ENCODE measurements at regions of chr17 and their contacts with region 1.

Region 1: DNA sequence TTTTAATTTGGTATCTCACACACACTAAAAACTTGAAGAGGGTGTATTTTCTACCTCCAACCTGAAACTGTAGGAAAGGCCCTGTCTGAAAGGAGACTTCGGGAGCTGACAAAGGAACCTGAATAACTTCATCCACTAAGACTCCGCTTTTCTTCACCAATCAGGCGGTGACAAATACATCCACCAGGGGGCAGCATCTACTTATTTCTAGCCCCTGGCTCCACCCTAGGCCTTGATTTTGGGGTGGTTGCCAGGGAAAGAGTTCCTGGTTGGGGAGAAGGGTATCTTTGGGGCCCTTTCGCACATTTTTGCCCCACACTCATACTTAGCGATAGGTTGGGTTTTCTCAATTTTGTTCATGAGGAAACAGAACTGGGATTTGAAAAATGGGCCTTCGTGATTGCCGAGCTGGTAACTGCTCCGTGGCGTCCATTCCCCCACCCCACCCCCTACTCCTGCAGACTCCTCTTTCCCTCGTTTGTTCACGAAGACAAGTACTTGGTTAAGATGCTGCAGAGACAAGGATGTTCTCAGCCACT is 4.8 kb upstream of the ARL4D start:
- DNase-seq: peak; percentile 92
- H3K4me3 Mint-ChIP-seq: no peak overlapping the region
- H3K27ac Mint-ChIP-seq: no peak overlapping the region
- H3K4me1 Mint-ChIP-seq: peaks cover 19% of the 10 kb centered on the region
- H3K27me3 Mint-ChIP-seq: no peaks in the 10 kb centered on the region
- CTCF ChIP-seq: peak; percentile 79

Region 2: DNA sequence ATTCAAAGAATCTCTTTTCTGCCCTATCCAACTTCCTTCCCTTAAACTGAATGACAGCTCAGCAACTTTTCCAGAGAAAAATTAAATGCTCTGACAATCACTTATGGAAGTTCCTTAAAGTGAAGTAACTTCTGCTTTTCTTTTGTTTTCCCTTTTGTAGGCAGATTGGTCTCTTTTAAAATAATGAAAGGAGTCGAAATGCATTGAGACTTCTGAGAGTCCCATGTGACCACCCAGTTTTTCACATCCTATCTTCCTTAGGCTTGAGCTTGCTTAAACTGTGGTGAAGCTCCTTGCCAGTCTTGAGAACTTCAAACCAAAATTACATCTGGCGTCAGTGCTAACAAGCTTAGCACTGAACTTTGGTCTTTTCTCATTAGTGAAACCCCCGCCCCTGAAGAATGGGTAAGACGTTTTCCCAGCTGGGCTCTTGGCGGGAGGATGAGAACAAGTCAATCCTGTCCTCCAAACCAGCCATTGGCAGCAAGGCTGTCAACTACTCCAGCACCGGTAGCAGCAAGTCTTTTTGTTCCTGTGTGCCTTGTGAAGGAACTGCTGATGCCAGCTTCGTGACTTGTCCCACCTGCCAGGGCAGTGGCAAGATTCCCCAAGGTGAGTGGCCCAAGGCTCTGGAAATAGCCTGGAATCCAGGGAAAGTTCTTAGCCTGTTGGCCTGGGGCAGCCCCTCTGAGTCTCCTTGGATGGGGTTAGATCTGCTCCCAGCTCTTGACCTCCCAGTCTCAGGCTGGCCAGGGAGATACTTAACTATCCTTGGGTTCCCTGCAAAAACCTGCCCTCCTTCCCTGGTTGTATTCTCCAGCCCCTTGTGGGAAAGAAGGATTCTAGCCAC is 181.1 kb before region 1 on chr17:
- CTCF ChIA-PET with region 1: no interaction called
- POLR2A ChIA-PET with region 1: no interaction called
- intact Hi-C with region 1: no loop called
- DNase-seq: no peak
- H3K4me3 Mint-ChIP-seq: peak overlapping the region; percentile 69
- H3K27ac Mint-ChIP-seq: peak overlapping the region; percentile 71
- H3K4me1 Mint-ChIP-seq: peaks cover 8% of the 10 kb centered on the region
- H3K27me3 Mint-ChIP-seq: no peaks in the 10 kb centered on the region
- CTCF ChIP-seq: no peak

Region 3: DNA sequence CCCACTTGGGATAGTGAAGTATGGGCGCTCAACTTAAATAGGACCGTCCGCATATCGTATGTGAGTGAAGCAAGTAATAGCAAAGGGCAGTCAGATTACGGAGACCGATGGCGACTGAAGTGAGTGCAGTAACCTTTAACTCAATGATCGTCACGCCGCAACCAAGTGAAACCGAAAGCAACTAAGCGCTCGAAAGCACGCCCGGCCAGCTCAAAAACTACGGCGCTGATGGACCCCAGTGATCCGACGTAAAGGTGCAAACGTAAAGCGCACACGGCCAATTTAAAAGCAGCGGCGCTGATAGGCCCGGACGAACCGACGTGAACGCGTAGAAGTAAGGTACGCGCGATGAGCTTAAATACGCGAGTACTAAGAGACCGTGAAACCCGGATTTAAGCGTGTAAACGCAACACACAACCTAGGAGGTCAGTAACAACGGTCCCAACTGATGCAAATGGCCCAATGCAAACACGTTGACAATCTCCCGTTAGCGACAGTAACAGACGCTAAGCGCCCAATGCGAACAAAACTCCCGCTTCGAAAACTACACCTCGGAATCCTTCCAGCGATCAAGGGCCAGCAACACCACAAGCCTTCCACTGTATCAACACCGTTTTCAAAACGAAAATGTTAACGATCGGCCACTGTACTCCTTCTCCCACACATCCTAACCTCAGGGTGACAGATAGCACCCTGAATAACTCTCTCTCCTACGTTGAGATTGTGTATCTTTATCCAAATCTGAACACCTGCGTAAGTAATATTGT is 33.1 kb before region 1 on chr17:
- CTCF ChIA-PET with region 1: interaction called, 6 read pairs
- POLR2A ChIA-PET with region 1: interaction called, 350 read pairs
- intact Hi-C with region 1: no loop called
- DNase-seq: peak; percentile 99
- H3K4me3 Mint-ChIP-seq: peak overlapping the region; percentile 79
- H3K27ac Mint-ChIP-seq: peak overlapping the region; percentile 100
- H3K4me1 Mint-ChIP-seq: peaks cover 26% of the 10 kb centered on the region
- H3K27me3 Mint-ChIP-seq: no peaks in the 10 kb centered on the region
- CTCF ChIP-seq: no peak

Region 4: GRCh38 chr17:43406676-43407645 is 12.9 kb after region 1 on chr17:
- CTCF ChIA-PET with region 1: interaction called, 30 read pairs
- POLR2A ChIA-PET with region 1: interaction called, 654 read pairs
- intact Hi-C with region 1: no loop called
- DNase-seq: no peak
- H3K4me3 Mint-ChIP-seq: no peak overlapping the region
- H3K27ac Mint-ChIP-seq: no peak overlapping the region
- H3K4me1 Mint-ChIP-seq: peaks cover 28% of the 10 kb centered on the region
- H3K27me3 Mint-ChIP-seq: no peaks in the 10 kb centered on the region
- CTCF ChIP-seq: no peak

Region 5: DNA sequence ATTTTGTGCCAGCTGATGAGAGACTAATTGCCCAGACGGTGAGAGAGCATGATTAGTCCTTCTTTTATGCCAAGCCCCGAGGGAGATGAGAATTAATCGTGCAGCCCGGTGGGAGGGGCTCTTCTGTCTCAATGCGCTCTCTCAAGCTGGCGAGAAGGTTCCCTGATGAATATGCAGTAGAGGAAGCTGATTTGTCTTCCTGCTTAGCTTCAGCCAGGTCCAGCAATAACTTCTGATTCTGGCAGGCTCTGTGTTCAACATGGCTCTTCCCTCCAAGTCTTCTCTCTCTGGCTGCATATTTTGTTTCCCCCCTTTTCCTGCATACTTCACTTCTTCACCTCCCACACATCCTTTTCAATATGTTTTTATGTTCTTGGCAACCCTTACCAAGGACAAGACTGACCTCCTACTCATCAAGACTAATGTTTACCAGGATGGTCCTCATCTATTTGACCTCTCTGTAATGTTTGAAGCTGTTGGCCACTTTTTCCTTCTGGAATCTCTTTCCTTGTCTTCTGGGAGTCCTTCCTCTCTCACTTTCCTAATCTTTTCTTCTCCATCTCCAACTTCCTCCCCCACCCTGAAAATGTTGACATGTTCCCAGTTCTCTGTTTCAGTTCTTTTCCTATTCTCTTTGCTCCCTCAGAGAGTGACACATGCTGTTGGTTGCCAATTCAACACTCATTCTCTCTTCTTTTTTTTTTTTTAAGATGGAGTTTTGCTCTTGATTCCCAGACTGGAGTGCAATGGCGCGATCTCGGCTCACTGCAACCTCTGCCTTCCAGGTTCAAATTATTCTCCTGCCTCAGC is 37.9 kb after region 1 on chr17:
- CTCF ChIA-PET with region 1: interaction called, 3 read pairs
- POLR2A ChIA-PET with region 1: interaction called, 46 read pairs
- intact Hi-C with region 1: no loop called
- DNase-seq: peak; percentile 29
- H3K4me3 Mint-ChIP-seq: no peak overlapping the region
- H3K27ac Mint-ChIP-seq: no peak overlapping the region
- H3K4me1 Mint-ChIP-seq: peaks cover 40% of the 10 kb centered on the region
- H3K27me3 Mint-ChIP-seq: no peaks in the 10 kb centered on the region
- CTCF ChIP-seq: no peak

Region 6: DNA sequence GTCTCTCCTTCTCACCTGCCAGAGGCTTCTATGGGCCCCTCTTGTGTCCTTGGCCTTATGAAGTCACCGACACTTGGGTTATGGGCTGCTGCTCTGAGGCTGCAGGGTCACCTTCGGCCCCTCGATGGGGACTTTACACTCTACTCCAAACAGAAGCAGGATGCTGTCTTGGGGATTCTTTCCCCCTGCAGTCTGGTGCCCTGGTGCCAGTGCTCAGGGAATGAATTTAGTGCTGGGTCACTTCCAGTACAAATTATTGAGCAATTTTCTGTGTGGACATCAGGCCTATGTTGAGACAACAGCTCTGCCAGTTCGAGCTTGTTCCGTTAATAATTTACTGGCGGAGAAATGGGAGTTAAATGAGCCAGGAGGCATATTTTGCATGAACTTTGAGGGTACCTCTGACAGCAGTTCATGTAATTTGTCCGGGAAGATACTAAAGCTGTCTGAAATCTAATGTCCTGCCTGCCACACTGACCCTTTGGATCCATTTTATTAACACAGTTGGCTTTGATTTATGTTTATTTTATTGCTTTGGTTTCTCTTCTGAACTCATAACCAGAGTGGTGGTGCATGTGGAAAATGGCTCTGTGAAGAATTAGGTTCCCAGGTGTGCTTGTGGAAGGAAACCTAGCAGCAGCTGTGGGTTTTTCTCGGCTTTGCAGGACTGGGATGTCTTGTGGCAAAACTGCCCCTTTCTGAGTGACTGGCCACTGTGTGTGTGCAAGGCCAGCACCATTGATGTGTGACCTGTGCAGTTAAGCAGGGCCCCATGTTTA is 55.6 kb after region 1 on chr17:
- CTCF ChIA-PET with region 1: interaction called, 4 read pairs
- POLR2A ChIA-PET with region 1: interaction called, 640 read pairs
- intact Hi-C with region 1: no loop called
- DNase-seq: peak; percentile 82
- H3K4me3 Mint-ChIP-seq: no peak overlapping the region
- H3K27ac Mint-ChIP-seq: peak overlapping the region; percentile 68
- H3K4me1 Mint-ChIP-seq: peaks cover 17% of the 10 kb centered on the region
- H3K27me3 Mint-ChIP-seq: no peaks in the 10 kb centered on the region
- CTCF ChIP-seq: no peak

Region 7: DNA sequence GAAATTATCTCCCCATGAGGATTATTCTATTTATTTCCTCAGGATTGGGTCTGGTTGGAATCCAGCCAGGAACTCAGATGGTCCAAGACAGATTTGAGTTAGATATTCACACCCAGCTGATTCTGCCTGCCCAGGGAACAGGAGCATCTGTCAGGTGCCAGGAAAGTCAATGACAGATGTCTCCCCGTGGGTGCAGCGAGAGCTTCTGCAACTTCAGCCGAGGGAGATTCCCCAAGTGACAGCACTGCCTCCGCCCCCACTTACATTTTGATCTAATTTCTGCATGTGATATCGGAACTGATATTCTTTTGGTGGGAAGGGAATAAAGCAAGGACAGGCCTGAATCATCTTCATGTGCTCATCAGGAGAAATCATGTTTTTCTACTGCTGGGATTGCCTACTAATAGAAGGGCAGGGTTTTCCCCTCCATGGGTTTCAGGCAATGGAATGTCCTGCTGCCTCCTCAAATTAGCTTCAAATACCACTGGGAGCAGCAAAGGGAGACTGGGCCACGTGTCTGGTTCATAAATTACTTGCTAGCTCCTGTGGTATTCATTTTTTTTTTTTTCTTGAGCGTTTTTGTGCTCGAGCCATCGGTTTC is 74.1 kb after region 1 on chr17:
- CTCF ChIA-PET with region 1: interaction called, 40 read pairs
- POLR2A ChIA-PET with region 1: interaction called, 640 read pairs
- intact Hi-C with region 1: loop called (anchors 1 kb)
- DNase-seq: peak; percentile 55
- H3K4me3 Mint-ChIP-seq: peak overlapping the region; percentile 9
- H3K27ac Mint-ChIP-seq: peak overlapping the region; percentile 88
- H3K4me1 Mint-ChIP-seq: peaks cover 27% of the 10 kb centered on the region
- H3K27me3 Mint-ChIP-seq: no peaks in the 10 kb centered on the region
- CTCF ChIP-seq: no peak

Region 8: GRCh38 chr17:43483674-43484372 is 89.8 kb after region 1 on chr17 and contains the start of gene DHX8:
- CTCF ChIA-PET with region 1: interaction called, 374 read pairs
- POLR2A ChIA-PET with region 1: interaction called, 389 read pairs
- intact Hi-C with region 1: loop called (anchors 1 kb)
- DNase-seq: peak; percentile 98
- H3K4me3 Mint-ChIP-seq: peak within 1 kb of the TSS; percentile 92
- H3K27ac Mint-ChIP-seq: peak within 1 kb of the TSS; percentile 96
- H3K4me1 Mint-ChIP-seq: peaks cover 8% of the 10 kb centered on the region
- H3K27me3 Mint-ChIP-seq: no peaks in the 10 kb centered on the region
- CTCF ChIP-seq: peak; percentile 100
- total RNA-seq, gene DHX8: 56.9 and 62.1 TPM in 2 replicates

Measured in MCF 10A (cell line).